CD14-positive monocyte (primary cell): ENCODE measurements at regions of chr16 and their contacts with region 1.

Region 1: GRCh38 chr16:71311553-71312158 is 22.5 kb upstream of the CMTR2 start:
- DNase-seq: peak in 2 of 3 donors; percentile 32 to 34
- H3K4me3 ChIP-seq: no peak overlapping the region
- H3K4me3 Mint-ChIP-seq: peak overlapping the region in 1 of 2 donors; percentile 12
- H3K27ac ChIP-seq: no peak overlapping the region
- H3K27ac Mint-ChIP-seq: no peak overlapping the region
- H3K4me1 ChIP-seq: no peaks in the 10 kb centered on the region
- H3K4me1 Mint-ChIP-seq: no peaks in the 10 kb centered on the region
- H3K27me3 ChIP-seq: no peaks in the 10 kb centered on the region
- H3K27me3 Mint-ChIP-seq: peaks cover 9 to 17% (median 13%) of the 10 kb centered on the region in 3 donors
- CTCF ChIP-seq: peak; percentile 91

Region 2: GRCh38 chr16:71214746-71215381 is 96.8 kb before region 1 on chr16:
- intact Hi-C with region 1: loop called in 1 of 2 experiments (anchors 5 kb)
- DNase-seq: peak in 1 of 3 donors; percentile 3
- H3K4me3 ChIP-seq: no peak overlapping the region
- H3K4me3 Mint-ChIP-seq: no peak overlapping the region
- H3K27ac ChIP-seq: no peak overlapping the region
- H3K27ac Mint-ChIP-seq: no peak overlapping the region
- H3K4me1 ChIP-seq: no peaks in the 10 kb centered on the region
- H3K4me1 Mint-ChIP-seq: no peaks in the 10 kb centered on the region
- H3K27me3 ChIP-seq: no peaks in the 10 kb centered on the region
- H3K27me3 Mint-ChIP-seq: peaks cover 7 to 16% (median 7%) of the 10 kb centered on the region in 3 donors
- CTCF ChIP-seq: peak; percentile 29